Transverse colon (tissue), 4 donors: ENCODE measurements at regions of chr6 and their contacts with region 1.

Region 1: DNA sequence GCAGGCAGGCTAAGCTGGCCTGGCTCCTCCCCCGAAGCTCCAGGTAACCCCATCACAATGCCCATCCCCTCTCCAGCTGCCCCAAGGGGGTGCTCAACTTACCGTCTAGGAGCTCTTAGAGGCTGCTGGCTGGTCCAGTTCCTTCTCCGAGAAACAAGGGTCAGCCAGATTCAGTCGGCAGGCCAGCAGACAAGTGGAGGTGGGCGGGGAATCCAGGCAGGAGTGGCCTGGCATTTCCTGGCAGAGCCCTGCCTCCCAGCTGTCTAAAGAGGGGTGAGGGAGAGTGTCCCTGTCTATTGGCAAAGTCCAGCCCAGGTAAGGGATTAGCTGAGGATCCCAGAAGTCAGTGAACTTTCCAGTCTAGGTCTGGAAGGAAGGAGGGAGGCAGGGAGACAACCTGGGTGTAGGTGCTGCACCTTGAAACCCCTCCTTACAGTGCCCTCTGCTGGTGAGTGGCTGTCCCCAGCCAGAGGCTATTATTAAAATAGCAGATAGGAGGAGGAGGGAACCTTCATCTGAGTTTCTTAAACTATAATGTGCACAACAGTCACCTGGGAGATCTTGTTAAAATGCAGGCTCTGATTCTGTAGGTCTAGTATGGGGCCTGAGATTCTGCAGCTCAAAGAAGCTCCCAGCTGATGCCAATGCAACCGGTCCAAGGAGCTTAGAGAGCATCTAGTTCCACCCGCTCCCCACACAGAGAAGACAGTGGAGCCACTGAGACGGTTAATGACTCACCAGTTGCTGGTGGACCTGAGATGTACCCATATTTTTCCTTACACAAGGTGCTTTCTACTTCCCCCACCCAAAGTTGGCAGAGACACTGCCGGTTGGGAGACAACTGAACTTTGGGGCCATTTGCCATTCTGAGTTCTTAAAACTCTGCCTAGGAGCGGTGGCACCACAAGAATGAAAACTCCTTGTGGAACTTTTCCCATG is at the start of gene UNC5CL:
- DNase-seq: peak; percentile 73
- H3K4me3 ChIP-seq: no peak within 1 kb of the TSS
- H3K27ac ChIP-seq: peak within 1 kb of the TSS; percentile 7 to 46 (median 24)
- H3K4me1 ChIP-seq: peaks cover 0 to 20% (median 6%) of the 10 kb centered on the region in 4 donors
- H3K27me3 ChIP-seq: no peaks in the 10 kb centered on the region
- CTCF ChIP-seq: peak; percentile 56 to 78 (median 73)
- EP300 ChIP-seq: no peak
- POLR2A ChIP-seq: no peak
- total RNA-seq, gene UNC5CL: 2.5 to 8.4 (median 4.4) TPM in 3 of 4 donors, not detected in the other

Region 2: GRCh38 chr6:40819182-40819834 is 220.0 kb before region 1 on chr6:
- in situ Hi-C with region 1: no loop called
- intact Hi-C with region 1: no loop called
- DNase-seq: no peak
- H3K4me3 ChIP-seq: no peak overlapping the region
- H3K27ac ChIP-seq: no peak overlapping the region
- H3K4me1 ChIP-seq: no peaks in the 10 kb centered on the region
- H3K27me3 ChIP-seq: peaks cover 4% of the 10 kb centered on the region
- CTCF ChIP-seq: no peak
- EP300 ChIP-seq: no peak
- POLR2A ChIP-seq: no peak

Region 3: DNA sequence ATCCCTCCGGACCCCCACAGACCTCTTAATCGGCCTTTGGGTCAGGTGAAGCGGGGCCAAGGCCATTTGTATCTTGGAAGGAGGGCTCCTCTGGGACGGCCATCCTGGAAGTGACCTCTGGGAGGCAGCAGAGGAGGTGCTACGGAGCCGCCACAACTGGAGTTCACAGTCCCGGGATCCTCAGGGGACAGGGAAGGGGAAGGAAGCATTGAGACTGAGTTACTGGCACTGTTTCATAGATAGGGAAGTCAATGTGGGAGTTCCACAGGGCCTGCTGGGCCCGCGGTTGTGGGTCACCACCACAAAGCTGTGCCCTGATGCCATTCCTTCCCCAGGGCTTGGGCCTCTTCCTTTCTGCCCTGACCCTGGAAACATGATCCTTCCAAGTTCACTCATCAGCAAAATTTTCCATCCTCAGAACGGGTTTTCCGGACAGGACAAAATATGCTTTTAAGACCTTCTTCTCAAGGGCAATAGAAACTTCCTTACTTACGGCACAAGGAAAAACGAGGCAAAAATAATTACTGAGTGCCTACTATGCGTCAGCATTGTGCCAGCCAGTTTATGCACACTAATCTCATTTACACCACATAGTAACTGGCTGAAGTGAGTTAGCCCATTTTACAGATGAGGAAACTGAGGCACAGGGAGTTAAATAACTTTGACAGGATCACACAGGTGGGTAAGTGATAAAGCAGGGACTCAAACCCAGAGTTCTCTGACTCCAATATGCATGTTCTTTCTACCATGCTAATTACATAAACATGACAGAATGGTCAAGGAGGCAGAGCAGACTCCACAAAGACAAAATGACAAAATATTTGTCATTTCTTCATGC is 144.1 kb before region 1 on chr6:
- in situ Hi-C with region 1: no loop called
- intact Hi-C with region 1: loop called (anchors 10 kb)
- DNase-seq: peak; percentile 42
- H3K4me3 ChIP-seq: no peak overlapping the region
- H3K27ac ChIP-seq: no peak overlapping the region
- H3K4me1 ChIP-seq: no peaks in the 10 kb centered on the region
- H3K27me3 ChIP-seq: no peaks in the 10 kb centered on the region
- CTCF ChIP-seq: peak; percentile 43 to 61 (median 52)
- EP300 ChIP-seq: no peak
- POLR2A ChIP-seq: no peak

Region 4: GRCh38 chr6:41222513-41222912 is 183.2 kb after region 1 on chr6:
- in situ Hi-C with region 1: no loop called
- intact Hi-C with region 1: no loop called
- DNase-seq: no peak
- H3K4me3 ChIP-seq: no peak overlapping the region
- H3K27ac ChIP-seq: no peak overlapping the region
- H3K4me1 ChIP-seq: no peaks in the 10 kb centered on the region
- H3K27me3 ChIP-seq: peaks cover 18% of the 10 kb centered on the region
- CTCF ChIP-seq: no peak
- EP300 ChIP-seq: no peak
- POLR2A ChIP-seq: no peak